ENCODE measurements at regions of chr10 and their contacts with region 1.

Region 1: DNA sequence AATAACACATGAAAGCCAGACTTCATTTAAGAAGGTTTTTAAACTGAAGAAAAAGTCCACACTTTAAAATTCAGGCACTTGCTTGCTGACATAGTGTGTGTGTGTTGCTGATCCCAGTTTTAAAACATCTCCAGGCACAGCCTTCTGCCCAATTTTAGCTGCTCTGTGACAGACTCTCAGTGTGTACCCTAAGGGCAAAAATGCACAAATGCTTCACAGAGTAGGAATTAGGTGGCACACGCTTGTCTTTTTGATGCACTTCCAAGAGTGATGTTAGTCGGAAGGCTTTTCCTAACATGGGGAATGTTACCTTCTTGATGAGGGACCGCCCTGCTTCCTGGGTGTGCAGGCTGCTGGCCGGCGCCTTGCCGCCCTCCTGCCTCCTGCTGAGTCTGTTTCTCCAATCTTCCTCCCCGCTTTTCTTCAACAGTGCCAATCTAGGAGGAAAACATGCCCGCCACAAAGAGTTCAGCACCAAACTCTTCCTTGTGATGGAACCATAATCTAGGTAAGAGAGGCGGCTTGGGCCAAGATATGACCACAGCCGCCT is 122.3 kb downstream of the SVIL start:
- DNase-seq: no peak
- H3K4me3 ChIP-seq: no peak overlapping the region
- H3K27ac ChIP-seq: no peak overlapping the region
- H3K4me1 ChIP-seq: no peaks in the 10 kb centered on the region
- CTCF ChIP-seq: no peak

Region 2: GRCh38 chr10:29377333-29377961 is 135.1 kb before region 1 on chr10:
- CTCF ChIA-PET with region 1: no interaction called
- POLR2A ChIA-PET with region 1: no interaction called
- intact Hi-C with region 1: loop called (anchors 5 kb)
- DNase-seq: peak; percentile 29
- H3K4me3 ChIP-seq: no peak overlapping the region
- H3K27ac ChIP-seq: no peak overlapping the region
- H3K4me1 ChIP-seq: no peaks in the 10 kb centered on the region
- CTCF ChIP-seq: peak; percentile 82

Region 3: DNA sequence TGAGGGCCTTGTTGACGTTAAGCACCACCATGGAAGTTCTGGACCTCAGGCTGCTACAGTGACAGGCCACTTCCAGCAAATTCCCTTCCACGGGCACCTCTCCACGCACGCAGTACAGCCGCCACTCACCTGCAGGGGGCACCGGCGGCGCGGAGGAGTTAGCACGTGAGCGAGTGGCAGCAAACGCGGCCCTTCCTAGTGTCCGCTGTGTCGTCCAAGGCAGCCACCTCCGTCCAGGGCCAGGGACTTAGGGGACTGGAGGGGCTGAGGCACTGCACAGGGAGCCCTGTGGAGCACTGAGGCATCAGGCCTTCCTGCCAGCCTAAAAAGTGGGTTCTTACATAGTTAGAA is 42.2 kb before region 1 on chr10:
- CTCF ChIA-PET with region 1: no interaction called
- POLR2A ChIA-PET with region 1: no interaction called
- intact Hi-C with region 1: no loop called
- DNase-seq: peak; percentile 47
- H3K4me3 ChIP-seq: no peak overlapping the region
- H3K27ac ChIP-seq: no peak overlapping the region
- H3K4me1 ChIP-seq: peaks cover 11% of the 10 kb centered on the region
- CTCF ChIP-seq: peak; percentile 88

Region 4: DNA sequence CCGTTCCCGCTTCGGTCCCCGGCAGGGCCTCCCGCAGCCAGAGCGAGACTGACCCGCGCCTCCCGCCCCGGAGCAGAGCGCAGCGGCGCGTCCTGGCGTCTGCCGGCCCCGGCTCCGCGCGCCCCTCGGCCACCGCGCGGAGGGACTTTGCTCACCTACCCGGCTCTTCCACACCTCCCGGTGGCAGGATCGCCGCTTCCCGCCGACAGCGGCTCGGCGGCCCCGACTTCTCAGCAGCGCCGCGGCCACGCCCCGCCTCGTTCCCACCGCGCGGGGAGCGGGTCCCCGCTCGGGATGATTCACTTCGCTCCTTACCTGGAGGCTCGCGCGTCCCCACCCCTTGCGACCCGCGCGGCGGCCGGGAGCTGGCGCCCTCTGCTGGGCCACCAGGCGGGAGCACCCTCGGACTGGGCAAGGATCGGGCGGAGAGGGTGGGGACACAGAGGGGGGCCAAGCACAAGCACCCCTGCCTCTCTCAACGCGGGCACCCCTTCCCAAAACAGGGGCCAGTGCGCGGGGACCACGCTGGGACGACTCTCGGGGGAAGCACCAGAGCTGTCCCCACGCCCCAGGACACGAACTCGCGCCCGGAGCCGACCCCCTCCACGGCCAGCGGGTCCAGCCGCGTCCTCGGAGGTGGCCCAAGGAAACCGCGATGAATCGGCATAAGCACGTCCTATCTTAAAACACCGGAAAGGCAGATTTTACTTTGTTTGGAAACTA is 223.3 kb after region 1 on chr10:
- CTCF ChIA-PET with region 1: no interaction called
- POLR2A ChIA-PET with region 1: no interaction called
- intact Hi-C with region 1: no loop called
- DNase-seq: peak; percentile 2
- H3K4me3 ChIP-seq: no peak overlapping the region
- H3K27ac ChIP-seq: no peak overlapping the region
- H3K4me1 ChIP-seq: no peaks in the 10 kb centered on the region
- CTCF ChIP-seq: peak; percentile 71

Region 5: GRCh38 chr10:30671026-30671616 is 1158.6 kb after region 1 on chr10:
- CTCF ChIA-PET with region 1: no interaction called
- POLR2A ChIA-PET with region 1: no interaction called
- intact Hi-C with region 1: loop called (anchors 5 kb)
- DNase-seq: peak; percentile 66
- H3K4me3 ChIP-seq: no peak overlapping the region
- H3K27ac ChIP-seq: no peak overlapping the region
- H3K4me1 ChIP-seq: no peaks in the 10 kb centered on the region
- CTCF ChIP-seq: peak; percentile 87

Measured in OCI-LY7 (cell line).